ENCODE measurements at regions of chr5 and their contacts with region 1.

Region 1: GRCh38 chr5:88240684-88241083 is 28.0 kb downstream of the TMEM161B start:
- DNase-seq: no peak
- H3K4me3 ChIP-seq: no peak overlapping the region
- H3K4me3 Mint-ChIP-seq: no peak overlapping the region
- H3K27ac ChIP-seq: no peak overlapping the region
- H3K27ac Mint-ChIP-seq: no peak overlapping the region
- H3K4me1 ChIP-seq: no peaks in the 10 kb centered on the region
- H3K4me1 Mint-ChIP-seq: peaks cover 24 to 38% (median 31%) of the 10 kb centered on the region in 4 donors
- H3K27me3 ChIP-seq: no peaks in the 10 kb centered on the region
- H3K27me3 Mint-ChIP-seq: no peaks in the 10 kb centered on the region

Region 2: GRCh38 chr5:88183255-88183654 is 57.4 kb before region 1 on chr5:
- CTCF ChIA-PET with region 1: no interaction called
- POLR2A ChIA-PET with region 1: no interaction called
- intact Hi-C with region 1: no loop called
- DNase-seq: no peak
- H3K4me3 ChIP-seq: no peak overlapping the region
- H3K4me3 Mint-ChIP-seq: no peak overlapping the region
- H3K27ac ChIP-seq: no peak overlapping the region
- H3K27ac Mint-ChIP-seq: no peak overlapping the region
- H3K4me1 ChIP-seq: no peaks in the 10 kb centered on the region
- H3K4me1 Mint-ChIP-seq: no peaks in the 10 kb centered on the region
- H3K27me3 ChIP-seq: no peaks in the 10 kb centered on the region
- H3K27me3 Mint-ChIP-seq: no peaks in the 10 kb centered on the region

Region 3: GRCh38 chr5:88254320-88254719 is 13.6 kb after region 1 on chr5:
- CTCF ChIA-PET with region 1: interaction called, 4 read pairs
- POLR2A ChIA-PET with region 1: no interaction called
- intact Hi-C with region 1: loop called (anchors 2 kb)
- DNase-seq: no peak
- H3K4me3 ChIP-seq: no peak overlapping the region
- H3K4me3 Mint-ChIP-seq: no peak overlapping the region
- H3K27ac ChIP-seq: no peak overlapping the region
- H3K27ac Mint-ChIP-seq: no peak overlapping the region
- H3K4me1 ChIP-seq: peaks cover 21% of the 10 kb centered on the region
- H3K4me1 Mint-ChIP-seq: peaks cover 31 to 66% (median 52%) of the 10 kb centered on the region in 4 donors
- H3K27me3 ChIP-seq: no peaks in the 10 kb centered on the region
- H3K27me3 Mint-ChIP-seq: no peaks in the 10 kb centered on the region